Breast epithelium (tissue), 4 donors: ENCODE measurements at regions of chr16 and their contacts with region 1.

Region 1: DNA sequence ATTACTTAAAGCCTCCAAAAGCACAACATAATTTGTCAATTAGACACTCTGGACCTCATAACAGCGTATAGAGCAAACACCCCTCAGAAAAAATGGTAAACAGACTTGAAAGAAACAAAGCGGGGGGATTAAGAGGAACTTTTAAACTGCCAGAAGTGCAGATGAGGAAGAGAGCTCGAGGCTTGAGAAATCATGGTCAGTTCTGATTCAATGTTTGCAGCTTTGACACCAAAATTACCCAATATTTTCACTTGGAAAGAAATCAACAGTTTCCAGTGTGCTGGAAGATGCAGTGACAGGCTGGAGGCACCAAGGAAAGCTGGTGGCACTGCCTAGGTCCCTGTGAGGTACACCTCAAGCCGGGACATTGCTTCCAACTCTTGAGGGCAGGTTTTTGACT is 180.9 kb upstream of the TOX3 start:
- DNase-seq: no peak
- H3K4me3 ChIP-seq: no peak overlapping the region
- H3K27ac ChIP-seq: no peak overlapping the region
- H3K4me1 ChIP-seq: no peaks in the 10 kb centered on the region
- H3K27me3 ChIP-seq: no peaks in the 10 kb centered on the region
- CTCF ChIP-seq: no peak
- POLR2A ChIP-seq: no peak

Region 2: GRCh38 chr16:52705122-52705521 is 22.7 kb before region 1 on chr16:
- intact Hi-C with region 1: loop called (anchors 2 kb)
- DNase-seq: no peak
- H3K4me3 ChIP-seq: no peak overlapping the region
- H3K27ac ChIP-seq: no peak overlapping the region
- H3K4me1 ChIP-seq: no peaks in the 10 kb centered on the region
- H3K27me3 ChIP-seq: no peaks in the 10 kb centered on the region
- CTCF ChIP-seq: no peak
- POLR2A ChIP-seq: no peak